ENCODE measurements at regions of chr4 and their contacts with region 1.

Region 1: GRCh38 chr4:140851032-140851636 is 94.9 kb upstream of the TBC1D9 start:
- DNase-seq: no peak
- ATAC-seq: peak; percentile 88
- H3K4me3 Mint-ChIP-seq: no peak overlapping the region
- H3K27ac Mint-ChIP-seq: peak overlapping the region; percentile 55
- H3K4me1 Mint-ChIP-seq: peaks cover 24% of the 10 kb centered on the region
- H3K27me3 Mint-ChIP-seq: no peaks in the 10 kb centered on the region
- CTCF ChIP-seq: no peak

Region 2: GRCh38 chr4:140012688-140013486 is 838.2 kb before region 1 on chr4:
- CTCF ChIA-PET with region 1: interaction called, 3 read pairs
- POLR2A ChIA-PET with region 1: no interaction called
- intact Hi-C with region 1: loop called (anchors 1 kb)
- DNase-seq: no peak
- ATAC-seq: peak; percentile 81
- H3K4me3 Mint-ChIP-seq: no peak overlapping the region
- H3K27ac Mint-ChIP-seq: no peak overlapping the region
- H3K4me1 Mint-ChIP-seq: no peaks in the 10 kb centered on the region
- H3K27me3 Mint-ChIP-seq: peaks cover 10% of the 10 kb centered on the region
- CTCF ChIP-seq: no peak

Region 3: DNA sequence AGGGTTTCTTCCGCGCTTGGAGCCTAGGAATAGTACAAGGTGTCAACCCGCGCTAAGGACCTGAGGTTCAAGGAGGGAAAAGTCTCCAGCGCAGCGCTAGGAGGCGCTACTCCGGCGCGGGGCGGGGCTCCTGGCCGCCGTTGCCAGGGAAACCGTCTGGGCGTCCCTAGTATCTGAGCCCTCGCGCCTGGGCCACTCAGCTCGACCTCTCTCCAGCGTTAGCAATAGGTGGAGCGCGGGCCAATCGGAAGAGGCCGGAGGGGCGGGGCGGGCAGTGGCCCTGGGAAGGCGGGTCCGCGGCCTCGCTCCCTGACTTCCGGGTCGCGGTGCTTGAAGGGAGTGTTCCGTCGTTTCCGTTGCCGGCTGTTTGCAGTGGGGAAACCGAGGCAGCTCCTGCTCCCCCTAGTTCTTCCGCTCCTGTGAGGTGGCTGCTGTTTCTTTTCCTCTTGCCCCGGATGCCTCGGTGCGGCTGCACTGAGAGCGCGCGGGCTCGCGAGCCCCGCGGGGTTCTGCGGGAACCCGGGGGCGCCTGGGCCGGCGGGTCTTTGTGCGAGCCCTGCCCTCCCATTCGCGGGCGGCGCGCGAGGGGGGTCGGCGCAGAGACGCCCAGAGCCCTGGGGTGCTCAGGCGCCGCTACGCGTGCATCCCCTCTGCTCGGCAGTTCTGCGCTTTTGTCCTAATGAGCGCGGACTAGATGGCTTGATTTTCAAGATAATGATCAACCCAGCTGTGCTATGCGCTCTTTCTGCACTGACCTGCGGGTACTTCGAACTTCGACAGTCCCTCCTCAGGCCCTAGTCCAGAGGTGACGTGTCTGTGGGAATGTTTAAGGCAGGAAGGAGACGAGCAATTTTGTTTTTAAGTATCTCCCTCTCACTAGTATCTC is 327.0 kb before region 1 on chr4 and contains the start of gene ELMOD2:
- CTCF ChIA-PET with region 1: interaction called, 4 read pairs
- POLR2A ChIA-PET with region 1: no interaction called
- intact Hi-C with region 1: loop called (anchors 1 kb)
- DNase-seq: peak; percentile 94
- ATAC-seq: peak; percentile 99
- H3K4me3 Mint-ChIP-seq: peak within 1 kb of the TSS; percentile 90
- H3K27ac Mint-ChIP-seq: peak within 1 kb of the TSS; percentile 84
- H3K4me1 Mint-ChIP-seq: peaks cover 14% of the 10 kb centered on the region
- H3K27me3 Mint-ChIP-seq: no peaks in the 10 kb centered on the region
- CTCF ChIP-seq: peak; percentile 72
- total RNA-seq, gene ELMOD2: 20.4 and 20.8 TPM in 2 replicates

Region 4: DNA sequence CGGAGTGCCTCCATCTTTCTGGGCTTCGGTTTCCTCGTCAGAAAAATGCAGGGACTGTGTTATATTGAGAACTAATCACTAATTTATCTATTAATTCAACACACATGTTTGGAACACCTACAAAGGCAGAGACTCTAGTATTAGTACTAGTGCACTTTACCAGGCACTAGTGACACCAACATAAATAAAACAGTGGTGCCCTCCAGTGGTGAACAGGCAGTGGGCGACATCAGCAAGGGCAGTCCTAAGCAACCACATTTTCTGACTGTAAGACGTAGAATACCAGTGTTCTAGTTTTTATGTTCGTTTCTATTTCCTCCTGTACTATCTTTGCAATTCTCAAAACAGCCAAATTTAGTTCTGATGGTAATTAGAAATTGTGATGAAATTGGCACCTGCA is 213.3 kb before region 1 on chr4:
- CTCF ChIA-PET with region 1: interaction called, 13 read pairs
- POLR2A ChIA-PET with region 1: no interaction called
- intact Hi-C with region 1: loop called (anchors 1 kb)
- DNase-seq: no peak
- ATAC-seq: peak; percentile 70
- H3K4me3 Mint-ChIP-seq: no peak overlapping the region
- H3K27ac Mint-ChIP-seq: no peak overlapping the region
- H3K4me1 Mint-ChIP-seq: peaks cover 3% of the 10 kb centered on the region
- H3K27me3 Mint-ChIP-seq: no peaks in the 10 kb centered on the region
- CTCF ChIP-seq: no peak

Region 5: GRCh38 chr4:140756319-140757231 is 94.6 kb before region 1 on chr4 and contains the start of gene TBC1D9:
- CTCF ChIA-PET with region 1: interaction called, 27 read pairs
- POLR2A ChIA-PET with region 1: interaction called, 32 read pairs
- intact Hi-C with region 1: loop called (anchors 1 kb)
- DNase-seq: peak; percentile 70
- ATAC-seq: peak; percentile 48
- H3K4me3 Mint-ChIP-seq: peak within 1 kb of the TSS; percentile 89
- H3K27ac Mint-ChIP-seq: peak within 1 kb of the TSS; percentile 94
- H3K4me1 Mint-ChIP-seq: peaks cover 62% of the 10 kb centered on the region
- H3K27me3 Mint-ChIP-seq: no peaks in the 10 kb centered on the region
- CTCF ChIP-seq: no peak
- total RNA-seq, gene TBC1D9: 37.9 and 46.0 TPM in 2 replicates

Region 6: GRCh38 chr4:140829825-140830224 is 21.3 kb before region 1 on chr4:
- CTCF ChIA-PET with region 1: interaction called, 8 read pairs
- POLR2A ChIA-PET with region 1: no interaction called
- intact Hi-C with region 1: loop called (anchors 2 kb)
- DNase-seq: no peak
- ATAC-seq: peak; percentile 95
- H3K4me3 Mint-ChIP-seq: peak overlapping the region; percentile 33
- H3K27ac Mint-ChIP-seq: peak overlapping the region; percentile 91
- H3K4me1 Mint-ChIP-seq: peaks cover 73% of the 10 kb centered on the region
- H3K27me3 Mint-ChIP-seq: no peaks in the 10 kb centered on the region
- CTCF ChIP-seq: no peak